T-cell (primary cell): ENCODE measurements at regions of chr21 and their contacts with region 1.

Region 1: GRCh38 chr21:36141513-36141925 is 6.6 kb downstream of the CBR3 start:
- DNase-seq: peak; percentile 52 to 93 (median 80)
- ATAC-seq: peak; percentile 84 to 97 (median 89)
- H3K4me3 ChIP-seq: no peak overlapping the region
- H3K4me3 Mint-ChIP-seq: no peak overlapping the region
- H3K27ac ChIP-seq: peak overlapping the region; percentile 57
- H3K27ac Mint-ChIP-seq: peak overlapping the region; percentile 62 to 76
- H3K4me1 ChIP-seq: peaks cover 8 to 35% of the 10 kb centered on the region in 2 experiments
- H3K4me1 Mint-ChIP-seq: peaks cover 24 to 35% (median 25%) of the 10 kb centered on the region in 3 donors
- H3K27me3 ChIP-seq: no peaks in the 10 kb centered on the region
- H3K27me3 Mint-ChIP-seq: no peaks in the 10 kb centered on the region

Region 2: DNA sequence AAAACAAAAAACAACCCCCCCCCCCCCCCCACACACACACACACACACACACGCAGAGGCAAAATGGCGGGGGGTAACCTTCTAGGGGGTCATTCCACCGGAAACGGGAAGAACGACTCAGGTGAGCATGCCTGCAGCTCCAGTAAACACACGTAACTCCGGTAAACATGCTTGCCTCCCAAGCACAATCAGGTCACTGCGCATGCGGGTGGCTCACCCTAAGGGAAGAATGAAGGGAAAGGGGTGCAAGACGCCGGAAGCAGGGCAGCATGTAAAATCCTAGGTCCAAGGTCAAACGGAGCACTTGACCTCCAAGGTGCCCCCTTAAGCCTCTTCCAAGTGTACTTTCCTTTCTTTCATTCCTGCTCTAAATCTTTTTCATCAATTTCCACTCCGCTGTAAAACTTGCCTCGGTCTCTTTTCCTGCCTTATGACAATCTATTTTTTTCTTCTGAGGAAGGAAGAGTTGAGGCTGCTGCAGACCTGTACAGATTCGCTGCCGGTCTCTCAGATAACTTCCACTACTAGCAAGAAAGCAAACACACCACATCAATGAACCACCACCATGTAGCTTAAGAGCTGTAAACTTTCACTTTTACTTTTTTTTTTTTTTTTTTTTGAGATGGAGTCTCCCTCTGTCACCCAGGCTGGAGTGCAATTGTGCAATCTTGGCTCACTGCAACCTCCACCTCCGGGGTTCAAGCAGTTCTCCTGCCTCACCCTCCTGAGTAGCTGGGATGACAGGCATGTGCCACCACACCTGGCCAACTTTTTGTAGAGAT is 27.7 kb before region 1 on chr21:
- CTCF ChIA-PET with region 1: interaction called in 1 of 2 experiments, 3 read pairs
- POLR2A ChIA-PET with region 1: interaction called in 1 of 2 experiments, 12 read pairs
- DNase-seq: peak in 30 of 35 experiments; percentile 11 to 84 (median 42)
- ATAC-seq: peak; percentile 82 to 93 (median 86)
- H3K4me3 ChIP-seq: peak overlapping the region; percentile 68 to 75
- H3K4me3 Mint-ChIP-seq: peak overlapping the region; percentile 68 to 82 (median 72)
- H3K27ac ChIP-seq: peak overlapping the region; percentile 73
- H3K27ac Mint-ChIP-seq: peak overlapping the region; percentile 90 to 95
- H3K4me1 ChIP-seq: peaks cover 28 to 29% of the 10 kb centered on the region in 2 experiments
- H3K4me1 Mint-ChIP-seq: peaks cover 26 to 33% (median 31%) of the 10 kb centered on the region in 3 donors
- H3K27me3 ChIP-seq: no peaks in the 10 kb centered on the region
- H3K27me3 Mint-ChIP-seq: no peaks in the 10 kb centered on the region

Region 3: DNA sequence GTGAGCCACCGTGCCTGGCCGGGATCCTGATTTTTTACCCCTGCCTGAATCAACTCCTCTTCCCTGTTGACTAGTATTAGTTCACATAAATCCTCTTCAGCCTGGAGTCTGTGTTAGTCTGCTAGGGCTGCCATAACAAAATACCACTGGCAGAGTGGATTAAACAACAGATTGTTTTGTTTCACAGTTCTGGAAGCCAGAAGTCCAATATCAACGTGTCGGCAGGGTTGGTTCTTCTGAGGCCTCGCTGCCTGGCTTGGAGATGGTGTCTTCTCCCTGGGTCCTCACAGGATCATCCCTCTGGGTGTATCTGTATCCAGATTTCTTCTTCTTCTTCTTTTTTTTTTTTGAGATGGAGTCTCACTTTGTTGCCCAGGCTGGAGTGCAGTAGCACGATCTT is 33.3 kb after region 1 on chr21:
- CTCF ChIA-PET with region 1: interaction called in 1 of 2 experiments, 11 read pairs
- POLR2A ChIA-PET with region 1: no interaction called
- DNase-seq: no peak
- ATAC-seq: no peak
- H3K4me3 ChIP-seq: no peak overlapping the region
- H3K4me3 Mint-ChIP-seq: no peak overlapping the region
- H3K27ac ChIP-seq: no peak overlapping the region
- H3K27ac Mint-ChIP-seq: peak overlapping the region; percentile 52 to 73
- H3K4me1 ChIP-seq: peaks cover 4 to 26% of the 10 kb centered on the region in 2 experiments
- H3K4me1 Mint-ChIP-seq: peaks cover 14 to 38% (median 15%) of the 10 kb centered on the region in 3 donors
- H3K27me3 ChIP-seq: no peaks in the 10 kb centered on the region
- H3K27me3 Mint-ChIP-seq: no peaks in the 10 kb centered on the region